Activated naive CD4-positive, alpha-beta T cell treated with anti-CD3 and anti-CD28 coated beads for 36 hours (primary cell): ENCODE measurements at regions of chr9 and their contacts with region 1.

Region 1: GRCh38 chr9:91131433-91131839 is 230.3 kb downstream of the AUH start:
- DNase-seq: peak; percentile 86
- H3K4me3 Mint-ChIP-seq: no peak overlapping the region
- H3K27ac Mint-ChIP-seq: peak overlapping the region; percentile 82
- H3K4me1 Mint-ChIP-seq: peaks cover 15% of the 10 kb centered on the region
- H3K27me3 Mint-ChIP-seq: peaks cover 11% of the 10 kb centered on the region

Region 2: DNA sequence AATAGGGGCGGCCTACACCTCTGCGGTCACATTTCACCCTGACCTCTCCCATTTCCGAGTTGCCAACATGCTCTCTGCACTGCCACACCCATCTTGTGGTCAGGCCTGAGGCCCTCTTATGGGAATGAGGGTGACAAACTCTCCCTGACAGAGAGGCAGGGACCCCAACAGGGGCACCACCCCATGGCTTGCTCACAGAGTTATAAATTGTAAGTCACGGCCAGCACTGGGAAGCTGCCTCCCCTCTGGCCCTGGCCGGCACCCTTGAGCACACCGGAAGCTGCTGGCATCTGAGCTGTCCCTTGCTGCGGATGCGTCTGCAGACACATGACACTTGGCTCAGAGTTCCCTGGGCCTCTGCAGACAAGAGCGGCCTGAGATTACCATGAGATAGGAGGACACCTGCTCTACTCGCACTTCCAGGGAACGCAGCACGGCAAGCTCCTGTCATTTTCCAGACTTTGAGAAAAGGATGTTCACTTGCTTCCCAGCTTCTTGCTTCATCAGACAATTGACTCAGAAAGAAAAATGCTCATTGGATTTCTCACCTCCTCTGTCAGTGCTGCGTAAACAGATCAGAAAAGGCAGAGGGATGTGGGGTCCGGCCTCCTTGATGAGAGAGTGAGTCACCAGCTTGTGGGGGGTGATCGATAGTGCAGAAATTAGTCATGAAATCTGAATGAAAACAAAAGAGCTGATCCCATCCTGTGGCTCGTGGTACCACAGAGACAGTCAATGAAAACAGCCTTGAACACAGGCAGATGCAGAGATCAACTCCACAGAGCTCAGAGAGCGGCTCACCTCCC is 60.0 kb before region 1 on chr9:
- CTCF ChIA-PET with region 1: no interaction called
- intact Hi-C with region 1: loop called (anchors 2 kb)
- DNase-seq: peak; percentile 85
- H3K4me3 Mint-ChIP-seq: no peak overlapping the region
- H3K27ac Mint-ChIP-seq: peak overlapping the region; percentile 57
- H3K4me1 Mint-ChIP-seq: peaks cover 11% of the 10 kb centered on the region
- H3K27me3 Mint-ChIP-seq: peaks cover 13% of the 10 kb centered on the region

Region 3: DNA sequence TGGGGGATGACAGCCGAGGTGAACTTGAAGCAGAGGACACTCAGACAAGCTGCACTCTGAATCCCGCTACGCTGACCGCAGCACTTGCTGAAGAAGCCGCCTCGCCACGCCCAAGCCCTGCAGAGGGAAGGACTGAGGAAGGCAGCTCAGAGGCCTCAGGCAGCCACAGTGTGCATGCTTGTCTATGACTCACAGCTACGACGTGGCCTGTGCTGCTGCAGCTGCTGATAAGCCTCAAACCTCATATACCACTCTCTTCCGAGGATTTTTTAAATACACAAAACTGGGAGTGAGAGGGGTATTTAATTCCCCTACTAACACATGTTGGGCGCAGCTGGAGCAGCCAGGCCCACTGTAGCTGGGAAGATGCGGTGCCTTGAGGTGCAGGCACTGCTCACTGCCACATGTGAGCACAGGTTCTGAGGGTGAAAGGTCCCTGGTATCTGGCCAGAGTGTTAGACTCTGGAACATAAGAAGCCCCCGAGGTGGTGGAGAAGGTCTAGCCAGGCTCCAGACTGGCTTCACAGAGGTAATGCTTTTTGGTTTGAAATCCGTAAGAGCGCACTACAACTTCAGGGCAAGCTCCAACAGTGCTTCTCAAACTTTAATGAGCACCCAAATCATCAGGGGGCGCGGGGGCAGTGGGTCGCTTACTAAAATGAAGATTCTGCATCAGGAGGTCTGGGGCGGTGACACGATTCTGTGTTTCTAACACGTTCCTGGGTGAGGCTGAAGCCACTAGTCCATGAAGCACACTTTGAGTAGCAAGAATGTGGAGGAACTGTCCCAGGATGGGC is 33.5 kb after region 1 on chr9:
- CTCF ChIA-PET with region 1: no interaction called
- intact Hi-C with region 1: no loop called
- DNase-seq: peak; percentile 78
- H3K4me3 Mint-ChIP-seq: no peak overlapping the region
- H3K27ac Mint-ChIP-seq: peak overlapping the region; percentile 54
- H3K4me1 Mint-ChIP-seq: peaks cover 37% of the 10 kb centered on the region
- H3K27me3 Mint-ChIP-seq: peaks cover 9% of the 10 kb centered on the region

Region 4: DNA sequence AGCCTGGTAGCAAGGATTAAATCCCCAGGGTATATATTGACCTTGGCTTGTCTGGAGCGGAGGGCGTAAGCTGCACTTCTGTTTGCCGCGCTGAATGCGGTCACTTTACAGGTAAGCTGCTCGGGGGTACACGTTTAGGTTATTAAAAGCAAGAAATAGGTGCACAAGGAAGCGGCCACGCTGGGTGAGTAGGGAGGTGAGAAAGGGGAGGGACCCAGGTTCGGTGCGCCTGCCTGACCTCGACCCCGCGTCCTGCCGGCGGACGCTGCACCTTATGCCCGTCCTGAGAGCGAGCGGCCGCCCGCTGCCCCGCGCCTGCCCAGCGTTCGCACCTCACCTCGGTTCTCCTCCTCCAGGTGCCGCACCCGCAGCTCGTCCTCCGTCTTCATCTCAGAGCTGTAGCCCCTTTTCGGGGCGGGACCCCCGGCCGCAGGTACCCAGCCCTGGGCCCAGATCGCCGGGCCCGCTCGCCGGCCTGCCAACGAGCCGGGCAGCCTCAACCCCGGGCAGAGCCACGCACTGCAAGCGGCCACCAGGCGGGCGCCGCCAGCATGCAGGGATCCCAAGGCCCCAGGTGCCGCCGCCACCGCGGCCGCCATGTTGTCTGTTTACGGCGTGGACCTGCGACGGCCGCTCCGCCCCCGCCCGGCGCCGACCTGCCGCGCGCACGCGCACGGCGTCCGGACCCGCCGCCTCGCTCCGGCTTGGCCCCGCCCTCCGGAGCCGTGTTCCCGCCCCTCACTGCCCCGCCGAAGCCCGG is 230.0 kb after region 1 on chr9 and contains the start of gene AUH:
- CTCF ChIA-PET with region 1: no interaction called
- intact Hi-C with region 1: no loop called
- DNase-seq: peak; percentile 85
- H3K4me3 Mint-ChIP-seq: peak within 1 kb of the TSS; percentile 91
- H3K27ac Mint-ChIP-seq: peak within 1 kb of the TSS; percentile 79
- H3K4me1 Mint-ChIP-seq: peaks cover 44% of the 10 kb centered on the region
- H3K27me3 Mint-ChIP-seq: no peaks in the 10 kb centered on the region
- total RNA-seq, gene AUH: 13.4 to 14.4 TPM